GM23248 (cell line): ENCODE measurements at regions of chr13 and their contacts with region 1.

Region 1: GRCh38 chr13:64471916-64472315 is 2758.2 kb downstream of the PCDH9 start:
- DNase-seq: peak; percentile 54
- H3K4me3 ChIP-seq: no peak overlapping the region
- H3K27ac ChIP-seq: no peak overlapping the region
- H3K4me1 ChIP-seq: no peaks in the 10 kb centered on the region
- H3K27me3 ChIP-seq: no peaks in the 10 kb centered on the region

Region 2: DNA sequence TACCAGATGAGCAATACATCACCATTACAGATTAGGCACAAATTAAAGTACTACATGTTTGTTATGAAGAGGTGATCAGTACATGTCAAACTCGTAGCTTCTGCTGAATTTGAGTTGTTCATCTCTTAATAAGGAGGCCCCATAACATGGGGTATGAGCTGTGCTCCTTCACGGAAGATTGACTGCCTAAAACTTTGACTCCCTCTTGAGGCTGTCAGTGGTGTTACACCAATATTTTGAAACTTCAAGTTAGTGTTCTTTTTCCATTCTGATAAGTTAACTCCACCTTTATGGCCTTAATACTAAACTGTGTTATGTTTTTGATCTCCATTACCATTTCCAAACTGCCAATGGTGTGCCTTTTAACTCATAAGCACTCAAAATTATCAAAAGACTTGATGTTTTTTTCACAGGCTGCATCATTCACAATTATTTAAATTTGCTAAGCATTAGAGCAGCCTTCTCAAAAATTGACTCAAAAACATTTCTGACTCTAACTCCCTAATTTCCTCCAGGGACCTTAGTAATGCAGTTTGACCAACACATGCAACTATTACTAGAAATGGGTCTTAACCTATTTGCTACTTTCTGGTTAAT is 1166.8 kb after region 1 on chr13:
- in situ Hi-C with region 1: loop called (anchors 25 kb)
- DNase-seq: peak; percentile 48
- H3K4me3 ChIP-seq: no peak overlapping the region
- H3K27ac ChIP-seq: no peak overlapping the region
- H3K4me1 ChIP-seq: no peaks in the 10 kb centered on the region
- H3K27me3 ChIP-seq: no peaks in the 10 kb centered on the region